AG04449 (cell line): ENCODE measurements at regions of chr1 and their contacts with region 1.

Region 1: DNA sequence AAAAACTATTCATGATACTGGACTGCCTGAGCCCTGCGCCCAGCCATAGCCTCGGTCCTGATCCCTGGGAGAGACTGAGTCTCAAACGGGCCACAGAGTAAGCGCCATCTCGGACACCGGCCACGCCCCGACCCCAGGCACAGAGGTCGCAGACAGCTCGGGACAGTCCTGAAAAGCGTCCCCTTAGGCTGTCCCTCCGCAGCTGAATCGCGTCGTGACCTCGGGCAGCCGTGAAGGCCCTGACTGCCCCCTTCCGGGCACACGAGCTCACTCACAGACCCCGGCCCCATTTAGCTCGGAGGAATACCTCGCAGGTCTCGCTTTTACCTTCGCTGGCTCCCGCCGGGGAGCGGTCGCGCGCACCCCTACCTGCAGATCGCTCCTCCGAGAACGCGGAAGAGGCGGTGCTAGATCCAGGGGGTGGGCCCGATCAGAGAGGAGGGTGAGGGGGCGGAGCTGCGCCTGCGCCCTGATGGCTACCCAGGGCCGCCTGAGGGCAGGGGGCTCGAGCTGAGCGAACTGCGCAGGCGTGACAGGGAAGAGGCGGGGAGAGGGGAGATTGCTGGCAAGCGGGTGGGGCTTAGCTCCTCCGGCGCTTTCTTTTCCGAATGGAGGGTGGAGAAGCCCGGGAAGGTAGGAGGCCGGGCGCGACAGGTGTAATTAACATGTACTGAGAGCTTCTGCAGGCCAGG is at the start of gene MKNK1:
- DNase-seq: peak; percentile 46
- H3K4me3 ChIP-seq: peak within 1 kb of the TSS; percentile 98
- CTCF ChIP-seq: peak; percentile 15

Region 2: DNA sequence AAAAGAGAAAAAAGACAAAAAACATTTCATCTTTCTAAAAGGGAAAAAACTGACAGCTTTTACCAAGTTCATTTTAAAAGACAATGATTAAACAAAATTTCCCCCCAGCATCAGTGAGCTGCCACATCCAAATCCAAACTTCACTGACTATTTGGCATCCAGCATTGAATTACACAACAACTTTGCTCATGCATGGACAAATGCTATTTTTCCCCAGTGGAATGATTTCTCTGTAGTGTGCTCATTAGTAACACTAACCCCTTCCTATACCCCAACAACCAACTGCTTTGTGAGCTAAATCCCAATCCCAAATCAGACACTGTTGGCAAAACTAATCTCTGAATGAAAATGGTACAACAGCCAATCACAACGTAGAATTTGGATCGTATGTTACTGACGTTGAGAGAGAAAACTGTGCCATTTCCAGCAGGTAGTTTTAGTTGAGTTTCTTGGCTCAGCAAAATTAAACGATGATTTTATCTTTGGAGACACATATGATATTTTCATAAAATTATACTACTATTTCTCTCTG is 509.5 kb before region 1 on chr1:
- CTCF ChIA-PET with region 1: no interaction called
- POLR2A ChIA-PET with region 1: no interaction called
- DNase-seq: no peak
- H3K4me3 ChIP-seq: no peak overlapping the region
- CTCF ChIP-seq: no peak

Region 3: DNA sequence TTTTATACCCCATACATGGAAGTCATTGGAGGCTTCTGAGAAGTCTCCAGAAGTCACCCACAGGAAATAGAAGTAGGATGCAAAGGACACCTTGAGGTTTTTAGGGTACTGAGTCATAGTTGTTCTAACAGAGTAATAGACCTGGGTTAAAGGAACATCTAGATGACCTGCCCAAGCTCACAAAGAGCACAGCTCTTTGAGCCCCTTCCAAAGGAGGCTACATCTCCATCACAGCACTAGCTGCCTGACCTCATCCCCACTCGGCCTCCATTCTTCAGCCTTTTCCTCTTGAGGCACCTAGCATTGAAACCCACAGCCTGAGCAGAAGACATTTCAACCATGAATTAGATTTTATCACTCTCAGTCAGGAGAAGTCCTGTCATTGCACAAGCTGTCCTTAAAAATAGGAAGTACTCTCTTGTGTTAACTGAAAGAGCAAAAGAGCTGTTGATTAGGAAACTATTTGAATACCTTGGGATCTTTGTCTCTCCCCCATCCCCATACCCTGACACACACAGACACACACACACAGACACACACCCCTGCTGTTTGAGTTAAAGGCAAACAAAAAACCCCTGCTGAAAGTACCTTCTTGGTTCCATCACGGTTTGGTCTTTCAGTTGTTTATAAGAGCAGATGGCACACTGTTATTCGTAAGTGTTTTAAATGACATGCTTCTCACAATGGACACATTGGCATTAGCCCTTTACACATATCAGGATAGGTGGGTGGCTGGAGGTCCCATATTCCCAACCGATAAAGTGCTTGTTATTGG is 22.1 kb before region 1 on chr1:
- CTCF ChIA-PET with region 1: no interaction called
- POLR2A ChIA-PET with region 1: no interaction called
- DNase-seq: no peak
- H3K4me3 ChIP-seq: no peak overlapping the region
- CTCF ChIP-seq: no peak

Region 4: GRCh38 chr1:46616277-46617107 is 12.5 kb after region 1 on chr1 and contains the start of gene MOB3C:
- CTCF ChIA-PET with region 1: interaction called, 23 read pairs
- POLR2A ChIA-PET with region 1: interaction called, 10 read pairs
- DNase-seq: peak; percentile 28
- H3K4me3 ChIP-seq: peak within 1 kb of the TSS; percentile 88
- CTCF ChIP-seq: no peak